ENCODE measurements at regions of chr13 and their contacts with region 1.

Region 1: DNA sequence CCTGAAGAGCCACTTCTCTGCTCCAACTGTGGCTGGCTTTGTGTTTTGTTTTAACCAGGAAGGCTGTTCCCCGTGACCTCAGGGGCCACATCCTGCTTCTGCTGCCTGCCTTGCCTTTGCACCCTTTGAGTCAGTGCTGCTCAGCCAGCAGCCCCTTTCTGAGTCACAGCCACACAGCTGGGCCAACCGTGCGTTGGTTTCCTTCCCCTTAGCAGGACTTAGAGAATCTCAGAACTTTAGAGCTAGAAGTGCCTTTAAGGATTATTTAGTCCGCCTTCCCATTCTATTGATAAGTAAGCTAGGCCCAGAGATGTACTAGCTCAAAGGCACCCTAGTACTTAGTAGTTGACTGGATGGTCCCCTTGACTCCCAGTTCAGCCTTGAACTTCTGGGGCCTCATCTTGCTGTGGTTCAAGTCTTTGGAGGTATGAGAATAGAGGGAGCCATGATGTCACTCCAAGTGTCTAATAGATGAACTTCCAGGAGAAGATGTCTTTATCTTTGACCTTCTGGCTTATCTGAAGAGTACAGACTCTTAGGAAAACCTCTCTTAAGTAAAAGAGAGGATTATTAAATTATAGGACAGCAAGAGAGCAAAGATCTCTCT is 8.0 kb downstream of the RGCC start:
- DNase-seq: peak in 2 of 4 experiments; percentile 29 to 63
- ATAC-seq: peak; percentile 39; the same call in 2 of the 3 replicates
- H3K4me3 ChIP-seq: no peak overlapping the region
- H3K27ac ChIP-seq: peak overlapping the region; percentile 68; the same call in 2 of the 3 replicates
- H3K4me1 ChIP-seq: peaks cover 27 to 42% of the 10 kb centered on the region in 2 experiments
- H3K27me3 ChIP-seq: no peaks in the 10 kb centered on the region
- CTCF ChIP-seq: no peak
- EP300 ChIP-seq: 0 out of 2 replicates have a peak, but pooled peaks have one; percentile 33
- POLR2A ChIP-seq: no peak
- RAD21 ChIP-seq: no peak

Region 2: DNA sequence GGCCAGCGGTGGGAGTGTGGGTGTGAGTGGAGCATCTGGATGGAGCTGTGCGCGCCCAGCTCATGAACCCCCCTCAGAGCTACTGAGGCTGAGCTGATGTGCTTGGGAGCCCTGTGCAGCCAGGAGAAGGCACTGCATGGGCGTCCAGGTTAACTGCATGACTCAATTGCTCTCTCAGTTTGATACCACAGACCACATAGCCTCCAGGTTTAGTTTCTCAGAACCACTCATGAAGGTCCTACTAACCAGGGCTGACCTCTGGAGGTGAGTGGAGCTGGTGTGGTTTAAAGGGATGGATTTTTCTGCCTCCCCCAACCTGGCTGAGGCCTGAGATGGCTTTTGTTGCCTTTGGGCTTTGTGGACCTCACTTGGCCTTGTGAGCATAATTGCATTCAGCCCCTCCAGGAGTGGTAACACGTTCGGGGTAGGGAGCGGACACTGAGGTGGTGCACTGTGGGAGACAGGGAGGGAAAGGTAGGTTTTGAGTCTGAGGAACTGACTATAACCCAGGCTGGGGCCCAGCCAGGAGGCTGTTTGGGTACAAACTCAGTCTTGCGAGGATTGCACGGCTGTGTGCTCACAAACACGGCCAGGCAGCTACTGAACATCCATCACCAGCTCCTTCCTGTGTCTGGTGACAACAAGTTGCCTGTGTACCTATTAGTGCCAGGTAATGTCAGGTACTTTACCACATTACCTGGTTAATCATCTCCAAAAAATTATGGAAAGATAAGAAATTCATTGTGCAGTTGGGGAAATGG is 89.5 kb after region 1 on chr13:
- CTCF ChIA-PET with region 1: no interaction called
- POLR2A ChIA-PET with region 1: no interaction called
- in situ Hi-C with region 1: no loop called
- intact Hi-C with region 1: loop called (anchors 1 kb)
- DNase-seq: no peak
- ATAC-seq: no peak
- H3K4me3 ChIP-seq: no peak overlapping the region
- H3K27ac ChIP-seq: no peak overlapping the region
- H3K4me1 ChIP-seq: no peaks in the 10 kb centered on the region; a peak in 1 of 5 replicates
- H3K27me3 ChIP-seq: peaks cover 0 to 15% of the 10 kb centered on the region in 2 experiments; a peak in 2 of 5 replicates
- CTCF ChIP-seq: no peak
- EP300 ChIP-seq: no peak
- POLR2A ChIP-seq: no peak
- RAD21 ChIP-seq: peak in 1 of 2 experiments; percentile 18; a peak in 1 of 4 replicates

Measured in K562 (cell line).